Heart right ventricle (tissue), 16 donors: ENCODE measurements at regions of chr22 and their contacts with region 1.

Region 1: DNA sequence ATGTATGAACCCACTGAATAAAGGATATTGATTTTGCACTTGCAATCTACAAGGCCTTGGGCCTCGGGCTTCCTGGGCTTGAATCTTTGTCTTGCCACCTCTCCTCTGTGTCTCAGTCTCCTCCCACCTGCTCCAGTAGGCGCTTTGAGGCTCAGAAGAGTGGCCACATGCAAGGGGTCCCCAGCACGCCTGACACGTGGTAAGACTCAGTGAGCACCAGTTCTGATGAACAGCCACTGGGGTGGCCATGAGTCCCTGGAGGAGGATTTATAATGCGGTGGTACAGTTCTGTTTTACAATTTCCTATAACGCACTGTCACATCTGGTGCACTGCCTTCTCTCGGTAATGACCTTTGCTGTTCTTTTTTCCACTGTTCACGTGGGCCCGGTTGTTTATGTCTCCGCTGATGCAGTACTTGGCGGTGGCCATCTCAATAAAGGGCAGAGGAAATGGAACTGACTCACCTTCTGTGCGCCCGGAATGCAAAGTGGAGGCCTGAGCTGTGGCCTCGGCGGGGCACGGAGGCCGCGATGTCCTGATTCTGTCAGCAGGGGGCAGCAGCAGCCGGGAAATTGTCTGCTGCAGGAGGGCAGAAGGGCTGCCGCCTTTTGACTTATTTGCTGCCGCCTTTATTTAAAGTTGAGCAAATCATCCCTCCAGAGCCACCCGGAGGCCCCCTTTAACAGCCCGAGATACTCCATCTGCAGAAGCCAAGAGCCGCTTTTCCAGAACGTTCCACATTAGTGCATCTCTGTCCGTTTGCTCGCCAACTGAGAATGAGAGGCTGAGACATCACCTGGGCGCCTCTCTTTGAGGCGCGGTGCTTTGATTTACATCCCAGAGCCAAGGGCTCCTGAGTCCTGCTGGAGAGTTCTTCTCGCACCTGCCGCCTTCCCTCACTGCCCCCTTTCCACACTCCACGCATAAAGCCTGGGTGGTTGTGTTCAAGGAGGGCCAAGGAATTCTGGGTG is 6.0 kb upstream of the IFT27 start:
- DNase-seq: peak; percentile 69 to 80
- ATAC-seq: peak; percentile 73 to 92 (median 90)
- H3K4me3 ChIP-seq: no peak overlapping the region
- H3K27ac ChIP-seq: peak overlapping the region in 1 of 10 donors; percentile 23
- H3K4me1 ChIP-seq: peaks cover 0 to 9% (median 4%) of the 10 kb centered on the region in 9 donors
- H3K27me3 ChIP-seq: peaks cover 0 to 40% (median 32%) of the 10 kb centered on the region in 7 donors
- CTCF ChIP-seq: peak; percentile 84 to 95 (median 90)

Region 2: DNA sequence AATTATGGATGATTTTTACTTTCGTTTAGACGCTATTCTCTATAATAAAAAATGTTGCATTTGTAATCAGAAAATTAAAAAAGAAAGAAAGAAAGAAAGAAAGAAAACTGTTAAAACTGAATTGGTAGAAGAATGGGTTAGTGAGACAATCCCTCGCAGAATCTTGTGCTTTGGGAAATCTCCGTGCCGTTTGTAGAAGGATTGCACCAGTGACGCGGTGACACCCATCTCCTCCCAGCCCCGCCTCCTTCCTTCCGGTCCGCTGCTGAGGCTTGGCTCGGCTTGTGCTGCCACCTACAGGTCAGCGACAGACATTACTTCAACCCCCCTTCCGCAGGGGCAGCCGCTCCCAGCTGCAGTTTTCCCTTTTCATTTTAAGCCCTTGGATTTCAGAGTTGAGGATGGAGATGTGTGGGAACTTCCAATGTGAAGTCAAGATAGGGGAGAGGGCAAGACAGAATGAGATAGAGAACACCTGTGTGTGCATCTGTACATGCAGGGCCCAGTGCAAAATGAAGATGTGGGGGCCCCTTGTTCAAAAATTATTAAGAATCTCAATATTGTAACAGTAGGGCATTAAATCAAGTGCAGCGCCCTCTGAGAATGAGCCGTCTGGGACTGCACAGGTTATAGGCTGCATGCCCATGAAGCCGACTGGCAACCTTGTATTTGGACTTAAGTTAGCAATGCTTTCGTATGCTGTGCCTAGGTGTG is 196.2 kb after region 1 on chr22:
- intact Hi-C with region 1: loop called (anchors 1 to 10 kb)
- DNase-seq: peak; percentile 90 to 91
- ATAC-seq: peak; percentile 94 to 98 (median 97)
- H3K4me3 ChIP-seq: peak overlapping the region in 9 of 10 donors; percentile 24 to 57 (median 52)
- H3K27ac ChIP-seq: peak overlapping the region in 2 of 10 donors; percentile 16 to 80
- H3K4me1 ChIP-seq: peaks cover 0 to 11% (median 5%) of the 10 kb centered on the region in 9 donors
- H3K27me3 ChIP-seq: peaks cover 0 to 26% (median 11%) of the 10 kb centered on the region in 7 donors
- CTCF ChIP-seq: peak; percentile 90 to 99 (median 96)

Region 3: GRCh38 chr22:37032546-37033460 is 250.9 kb after region 1 on chr22:
- intact Hi-C with region 1: loop called in 1 of 10 experiments (anchors 10 kb)
- DNase-seq: no peak
- ATAC-seq: peak in 3 of 8 donors; percentile 14 to 65 (median 36)
- H3K4me3 ChIP-seq: no peak overlapping the region
- H3K27ac ChIP-seq: no peak overlapping the region
- H3K4me1 ChIP-seq: peaks cover 0 to 9% (median 0%) of the 10 kb centered on the region in 9 donors
- H3K27me3 ChIP-seq: peaks cover 0 to 20% (median 14%) of the 10 kb centered on the region in 7 donors
- CTCF ChIP-seq: no peak